ENCODE measurements at regions of chr3 and their contacts with region 1.

Region 1: GRCh38 chr3:138408751-138409161 is 25.7 kb upstream of the ESYT3 start:
- DNase-seq: no peak
- ATAC-seq: peak; percentile 64
- H3K4me3 Mint-ChIP-seq: no peak overlapping the region
- H3K27ac Mint-ChIP-seq: peak overlapping the region; percentile 93
- H3K4me1 Mint-ChIP-seq: peaks cover 42% of the 10 kb centered on the region
- H3K27me3 Mint-ChIP-seq: peaks cover 13% of the 10 kb centered on the region
- CTCF ChIP-seq: no peak

Region 2: DNA sequence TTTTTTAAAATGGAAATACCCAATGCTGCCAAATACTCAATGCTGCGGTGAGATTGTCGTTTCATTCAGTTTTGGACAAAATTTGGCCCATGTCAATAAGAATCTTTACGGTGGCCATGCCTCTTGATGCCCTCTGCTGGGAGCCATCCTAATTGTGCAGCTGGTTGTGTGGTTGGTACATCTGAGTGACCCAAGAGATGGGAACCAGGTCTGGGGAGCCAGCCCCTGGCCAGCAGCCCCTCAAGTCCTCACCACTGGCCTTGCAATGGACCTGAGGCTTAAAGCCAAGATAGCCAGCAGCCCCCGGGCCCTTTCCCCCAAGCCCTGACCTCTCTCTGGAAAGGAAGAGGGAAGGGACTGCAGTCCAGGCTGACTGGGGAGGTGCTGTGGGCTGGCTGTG is 10.8 kb before region 1 on chr3:
- CTCF ChIA-PET with region 1: interaction called, 23 read pairs
- POLR2A ChIA-PET with region 1: no interaction called
- DNase-seq: no peak
- ATAC-seq: no peak
- H3K4me3 Mint-ChIP-seq: no peak overlapping the region
- H3K27ac Mint-ChIP-seq: no peak overlapping the region
- H3K4me1 Mint-ChIP-seq: peaks cover 32% of the 10 kb centered on the region
- H3K27me3 Mint-ChIP-seq: no peaks in the 10 kb centered on the region
- CTCF ChIP-seq: no peak